ENCODE measurements at regions of chr3 and their contacts with region 1.

Region 1: DNA sequence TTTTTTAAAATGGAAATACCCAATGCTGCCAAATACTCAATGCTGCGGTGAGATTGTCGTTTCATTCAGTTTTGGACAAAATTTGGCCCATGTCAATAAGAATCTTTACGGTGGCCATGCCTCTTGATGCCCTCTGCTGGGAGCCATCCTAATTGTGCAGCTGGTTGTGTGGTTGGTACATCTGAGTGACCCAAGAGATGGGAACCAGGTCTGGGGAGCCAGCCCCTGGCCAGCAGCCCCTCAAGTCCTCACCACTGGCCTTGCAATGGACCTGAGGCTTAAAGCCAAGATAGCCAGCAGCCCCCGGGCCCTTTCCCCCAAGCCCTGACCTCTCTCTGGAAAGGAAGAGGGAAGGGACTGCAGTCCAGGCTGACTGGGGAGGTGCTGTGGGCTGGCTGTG is 36.4 kb upstream of the ESYT3 start:
- DNase-seq: no peak
- H3K4me3 ChIP-seq: no peak overlapping the region
- H3K27ac ChIP-seq: no peak overlapping the region
- H3K4me1 ChIP-seq: peaks cover 8% of the 10 kb centered on the region
- H3K27me3 ChIP-seq: no peaks in the 10 kb centered on the region
- CTCF ChIP-seq: no peak
- EP300 ChIP-seq: no peak
- POLR2A ChIP-seq: no peak

Region 2: GRCh38 chr3:138338811-138339210 is 59.2 kb before region 1 on chr3:
- intact Hi-C with region 1: loop called in 1 of 4 experiments (anchors 5 kb)
- DNase-seq: peak in 2 of 5 donors; percentile 40 to 57
- H3K4me3 ChIP-seq: no peak overlapping the region
- H3K27ac ChIP-seq: no peak overlapping the region
- H3K4me1 ChIP-seq: peaks cover 3% of the 10 kb centered on the region
- H3K27me3 ChIP-seq: no peaks in the 10 kb centered on the region
- CTCF ChIP-seq: no peak
- EP300 ChIP-seq: no peak
- POLR2A ChIP-seq: no peak

Region 3: GRCh38 chr3:138459619-138460535 is 61.9 kb after region 1 on chr3:
- intact Hi-C with region 1: no loop called
- DNase-seq: peak in 1 of 5 donors; percentile 28
- H3K4me3 ChIP-seq: no peak overlapping the region
- H3K27ac ChIP-seq: no peak overlapping the region
- H3K4me1 ChIP-seq: no peaks in the 10 kb centered on the region
- H3K27me3 ChIP-seq: no peaks in the 10 kb centered on the region
- CTCF ChIP-seq: no peak
- EP300 ChIP-seq: no peak
- POLR2A ChIP-seq: no peak

Region 4: GRCh38 chr3:138625707-138626365 is 227.9 kb after region 1 on chr3:
- intact Hi-C with region 1: no loop called
- DNase-seq: no peak
- H3K4me3 ChIP-seq: no peak overlapping the region
- H3K27ac ChIP-seq: no peak overlapping the region
- H3K4me1 ChIP-seq: no peaks in the 10 kb centered on the region
- H3K27me3 ChIP-seq: no peaks in the 10 kb centered on the region
- CTCF ChIP-seq: no peak
- EP300 ChIP-seq: no peak
- POLR2A ChIP-seq: no peak

Measured in ovary (tissue), 10 donors.